SK-N-SH (cell line): ENCODE measurements at regions of chr4 and their contacts with region 1.

Region 1: DNA sequence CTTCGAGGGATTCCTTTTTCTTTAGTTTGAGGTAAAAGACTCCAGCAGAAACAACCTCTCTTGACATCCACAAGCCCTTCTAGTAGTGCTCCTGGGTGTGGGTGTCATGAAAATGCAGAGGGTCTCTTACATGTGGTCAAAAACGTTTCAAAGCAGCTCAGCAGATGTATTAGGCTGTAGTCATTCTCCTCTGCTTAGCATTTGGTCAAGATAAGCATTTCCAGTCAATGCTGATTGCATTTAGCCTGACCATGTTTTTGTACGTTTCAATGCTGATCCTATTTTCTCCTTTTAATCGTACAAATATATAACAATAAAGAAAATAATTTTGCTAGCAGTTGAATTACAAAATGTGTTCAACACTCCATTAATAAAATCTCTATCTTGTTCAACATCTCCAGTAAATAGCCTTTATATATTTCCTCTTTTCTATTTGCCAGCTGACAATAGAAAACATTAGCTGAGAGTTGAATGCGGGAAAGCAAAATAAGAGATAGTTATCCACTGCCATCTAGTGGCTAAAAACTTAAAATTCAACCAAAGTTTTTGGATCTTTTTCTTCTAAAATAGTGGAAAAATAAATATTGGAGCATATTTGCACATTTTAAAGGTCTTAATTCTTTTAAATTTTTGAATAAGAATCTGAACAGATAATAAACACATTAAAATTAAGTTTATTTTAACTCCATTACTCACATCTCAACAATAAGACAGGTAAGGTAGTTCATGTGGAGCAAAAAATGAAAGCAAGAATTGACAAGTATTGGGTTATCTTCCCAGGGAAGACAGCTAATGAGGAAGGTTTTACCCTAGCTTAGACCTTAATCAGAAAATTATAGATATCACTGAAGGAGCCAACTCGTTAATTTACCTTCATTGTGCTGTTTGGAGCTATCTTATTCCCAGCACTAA is 15.2 kb upstream of the PACRGL start:
- DNase-seq: peak; percentile 36
- H3K4me3 ChIP-seq: no peak overlapping the region
- H3K27ac ChIP-seq: no peak overlapping the region
- H3K4me1 ChIP-seq: peaks cover 0 to 3% of the 10 kb centered on the region in 2 experiments; a peak in 2 of 4 replicates
- H3K27me3 ChIP-seq: no peaks in the 10 kb centered on the region
- CTCF ChIP-seq: peak; percentile 76
- EP300 ChIP-seq: no peak
- RAD21 ChIP-seq: peak; percentile 81

Region 2: GRCh38 chr4:20305976-20306375 is 379.1 kb before region 1 on chr4:
- CTCF ChIA-PET with region 1: interaction called, 37 read pairs
- POLR2A ChIA-PET with region 1: no interaction called
- DNase-seq: peak; percentile 40
- H3K4me3 ChIP-seq: no peak overlapping the region
- H3K27ac ChIP-seq: no peak overlapping the region
- H3K4me1 ChIP-seq: no peaks in the 10 kb centered on the region; a peak in 1 of 4 replicates
- H3K27me3 ChIP-seq: no peaks in the 10 kb centered on the region
- CTCF ChIP-seq: peak; percentile 64
- EP300 ChIP-seq: no peak
- RAD21 ChIP-seq: peak; percentile 81

Region 3: GRCh38 chr4:20416800-20417199 is 268.3 kb before region 1 on chr4:
- CTCF ChIA-PET with region 1: interaction called, 27 read pairs
- POLR2A ChIA-PET with region 1: no interaction called
- DNase-seq: no peak
- H3K4me3 ChIP-seq: no peak overlapping the region
- H3K27ac ChIP-seq: peak overlapping the region in 1 of 2 experiments; percentile 17; a peak in 1 of 4 replicates
- H3K4me1 ChIP-seq: peaks cover 0 to 16% of the 10 kb centered on the region in 2 experiments; a peak in 3 of 4 replicates
- H3K27me3 ChIP-seq: no peaks in the 10 kb centered on the region
- CTCF ChIP-seq: no peak
- EP300 ChIP-seq: no peak; a peak in 1 of 4 replicates
- RAD21 ChIP-seq: no peak

Region 4: GRCh38 chr4:20422398-20422797 is 262.7 kb before region 1 on chr4:
- CTCF ChIA-PET with region 1: interaction called, 55 read pairs
- POLR2A ChIA-PET with region 1: no interaction called
- DNase-seq: peak; percentile 46
- H3K4me3 ChIP-seq: no peak overlapping the region
- H3K27ac ChIP-seq: no peak overlapping the region
- H3K4me1 ChIP-seq: peaks cover 0 to 20% of the 10 kb centered on the region in 2 experiments
- H3K27me3 ChIP-seq: no peaks in the 10 kb centered on the region
- CTCF ChIP-seq: peak; percentile 62
- EP300 ChIP-seq: no peak
- RAD21 ChIP-seq: peak; percentile 78

Region 5: DNA sequence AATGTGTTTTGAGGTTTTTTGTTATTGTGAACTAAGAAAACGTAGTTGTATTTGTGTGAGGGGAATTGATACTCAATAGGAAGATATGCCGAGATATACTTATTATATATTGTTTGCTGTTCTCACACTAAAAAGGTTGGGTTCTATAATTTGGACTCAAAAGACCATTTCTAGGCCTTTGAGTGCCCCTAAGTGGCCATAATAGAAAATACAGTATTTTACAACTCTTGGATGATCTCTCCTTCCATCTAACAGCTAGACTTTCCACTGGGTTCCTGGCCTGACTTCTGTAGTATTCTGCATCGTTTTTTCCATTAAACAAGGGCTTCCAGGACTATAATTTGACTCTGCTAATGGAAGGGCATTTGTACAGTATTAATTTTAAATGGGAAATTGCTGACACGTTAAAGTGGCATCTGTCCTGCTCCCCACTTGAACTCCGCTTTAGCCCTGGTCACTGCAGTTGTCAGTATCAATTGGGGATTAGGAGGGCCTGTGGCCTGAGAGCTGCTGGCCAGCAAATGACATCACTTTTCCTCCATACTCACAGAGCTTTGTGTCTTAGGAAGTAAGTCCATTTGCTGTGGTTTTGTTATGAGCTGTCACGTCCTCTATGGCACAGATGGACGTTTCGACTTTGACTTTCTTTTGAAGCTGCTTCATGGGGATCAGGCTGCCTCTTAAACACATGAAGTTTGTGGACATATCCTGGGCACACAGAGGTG is 256.5 kb before region 1 on chr4:
- CTCF ChIA-PET with region 1: interaction called, 55 read pairs
- POLR2A ChIA-PET with region 1: no interaction called
- DNase-seq: no peak
- H3K4me3 ChIP-seq: no peak overlapping the region
- H3K27ac ChIP-seq: no peak overlapping the region
- H3K4me1 ChIP-seq: peaks cover 3 to 18% of the 10 kb centered on the region in 2 experiments; a peak in 3 of 4 replicates
- H3K27me3 ChIP-seq: no peaks in the 10 kb centered on the region
- CTCF ChIP-seq: peak; percentile 52
- EP300 ChIP-seq: no peak
- RAD21 ChIP-seq: peak; percentile 69

Region 6: DNA sequence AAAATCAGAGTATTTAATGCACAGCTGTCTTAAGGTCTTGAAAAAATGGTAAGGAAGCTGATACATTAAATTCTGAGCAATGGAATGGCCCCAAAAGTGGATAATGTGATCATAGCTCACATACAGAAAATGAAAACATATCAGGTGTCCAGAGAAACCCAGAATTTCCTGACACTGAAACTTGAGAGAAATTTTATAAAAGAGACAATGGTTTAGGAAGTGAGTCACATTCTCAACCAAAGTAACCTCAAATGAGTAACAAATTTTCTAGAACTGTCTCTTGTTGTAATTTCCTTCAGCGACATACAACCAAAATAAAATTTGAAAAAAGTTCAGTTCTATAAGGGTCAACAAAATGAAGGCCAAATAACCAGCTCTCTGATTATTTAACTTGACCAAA is 22.3 kb before region 1 on chr4:
- CTCF ChIA-PET with region 1: interaction called, 12 read pairs
- POLR2A ChIA-PET with region 1: no interaction called
- DNase-seq: no peak
- H3K4me3 ChIP-seq: no peak overlapping the region
- H3K27ac ChIP-seq: no peak overlapping the region
- H3K4me1 ChIP-seq: peaks cover 0 to 8% of the 10 kb centered on the region in 2 experiments; a peak in 1 of 4 replicates
- H3K27me3 ChIP-seq: no peaks in the 10 kb centered on the region
- CTCF ChIP-seq: no peak
- EP300 ChIP-seq: no peak
- RAD21 ChIP-seq: no peak

Region 7: DNA sequence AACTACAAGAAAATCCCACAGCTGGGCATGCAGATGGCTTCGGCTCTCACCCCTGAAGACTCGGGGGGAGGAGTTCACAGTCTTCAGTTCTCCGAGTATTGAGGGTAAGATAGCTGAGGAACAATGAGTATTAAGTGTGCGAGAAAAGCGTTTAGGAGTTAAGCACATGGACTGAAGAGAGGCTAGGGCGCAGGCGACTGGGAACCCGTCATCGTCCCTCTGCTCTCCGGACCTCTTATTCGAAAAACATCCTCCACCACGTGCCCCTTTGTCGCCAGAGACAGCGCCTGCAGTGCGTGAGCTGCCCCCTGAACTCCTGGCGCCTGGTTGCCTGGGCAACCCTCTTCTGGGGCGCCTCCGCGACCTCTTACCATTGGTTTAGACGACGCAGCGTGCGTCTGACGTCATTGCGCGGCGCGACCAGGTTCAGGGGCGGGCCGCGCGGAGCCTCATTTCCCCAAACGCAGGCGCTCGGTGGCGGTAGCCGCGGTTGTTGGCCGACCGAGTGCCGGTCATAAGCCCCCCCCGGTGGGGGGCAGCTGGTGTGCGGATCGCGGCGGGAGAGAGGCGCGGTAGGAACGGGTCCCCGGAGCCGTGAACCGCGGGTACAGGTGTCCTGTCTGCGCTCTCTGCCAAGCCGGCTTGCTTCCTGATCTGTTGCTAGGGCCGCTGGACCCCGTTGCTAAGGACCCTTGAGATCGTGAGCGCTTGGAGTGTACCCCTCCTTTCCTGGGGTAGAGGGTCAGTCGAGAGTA is 15.1 kb after region 1 on chr4 and contains the start of gene PACRGL:
- CTCF ChIA-PET with region 1: interaction called, 11 read pairs
- POLR2A ChIA-PET with region 1: interaction called, 4 read pairs
- DNase-seq: peak; percentile 91
- H3K4me3 ChIP-seq: peak within 1 kb of the TSS; percentile 72 to 97
- H3K27ac ChIP-seq: peak within 1 kb of the TSS; percentile 62 to 90
- H3K4me1 ChIP-seq: peaks cover 6 to 12% of the 10 kb centered on the region in 2 experiments; a peak in 3 of 4 replicates
- H3K27me3 ChIP-seq: no peaks in the 10 kb centered on the region
- CTCF ChIP-seq: no peak
- EP300 ChIP-seq: 0 out of 4 replicates have a peak, but pooled peaks of 1 of the 2 experiments have one; percentile 12
- RAD21 ChIP-seq: no peak
- polyA plus RNA-seq, gene PACRGL: 11.8 and 15.0 TPM in 2 replicates